SK-N-SH (cell line): ENCODE measurements at regions of chr7 and their contacts with region 1.

Region 1: DNA sequence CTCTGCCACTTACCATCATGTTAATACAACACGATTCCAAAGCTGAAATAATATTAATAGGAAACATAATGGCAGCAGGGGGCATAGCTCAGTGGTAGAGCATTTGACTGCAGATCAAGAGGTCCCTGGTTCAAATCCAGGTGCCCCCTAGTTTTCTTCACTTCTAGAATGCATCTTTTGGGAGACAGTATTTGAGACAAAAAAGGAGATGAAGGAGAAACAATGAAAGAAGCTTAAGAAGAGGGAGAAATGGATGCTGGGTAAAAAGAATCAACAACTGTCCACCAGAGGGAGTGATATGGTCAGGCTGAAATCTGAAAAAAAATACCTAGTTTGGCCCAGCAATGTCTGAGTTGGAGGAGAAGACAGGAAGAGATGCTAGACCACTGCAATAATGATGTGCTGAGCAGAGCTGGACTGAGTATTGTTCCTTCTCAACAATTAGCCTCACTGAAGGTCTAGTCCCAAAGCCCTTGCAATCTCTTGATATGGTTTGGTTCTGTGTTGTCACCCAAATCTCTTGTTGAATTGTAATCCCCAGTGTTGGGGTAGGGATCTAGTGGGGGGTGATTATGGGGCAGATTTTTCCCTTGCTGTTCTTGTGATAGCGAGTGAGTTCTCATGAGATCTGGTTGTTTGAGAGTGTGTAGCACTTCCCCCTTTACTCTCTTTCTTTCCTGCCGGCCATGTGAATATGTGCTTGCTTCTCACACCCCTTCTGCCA is 48.3 kb downstream of the ZNF783 start:
- DNase-seq: peak; percentile 69
- H3K4me3 ChIP-seq: no peak overlapping the region
- H3K27ac ChIP-seq: no peak overlapping the region
- H3K4me1 ChIP-seq: no peaks in the 10 kb centered on the region
- H3K27me3 ChIP-seq: no peaks in the 10 kb centered on the region
- CTCF ChIP-seq: peak; percentile 78
- EP300 ChIP-seq: no peak
- RAD21 ChIP-seq: peak; percentile 67

Region 2: DNA sequence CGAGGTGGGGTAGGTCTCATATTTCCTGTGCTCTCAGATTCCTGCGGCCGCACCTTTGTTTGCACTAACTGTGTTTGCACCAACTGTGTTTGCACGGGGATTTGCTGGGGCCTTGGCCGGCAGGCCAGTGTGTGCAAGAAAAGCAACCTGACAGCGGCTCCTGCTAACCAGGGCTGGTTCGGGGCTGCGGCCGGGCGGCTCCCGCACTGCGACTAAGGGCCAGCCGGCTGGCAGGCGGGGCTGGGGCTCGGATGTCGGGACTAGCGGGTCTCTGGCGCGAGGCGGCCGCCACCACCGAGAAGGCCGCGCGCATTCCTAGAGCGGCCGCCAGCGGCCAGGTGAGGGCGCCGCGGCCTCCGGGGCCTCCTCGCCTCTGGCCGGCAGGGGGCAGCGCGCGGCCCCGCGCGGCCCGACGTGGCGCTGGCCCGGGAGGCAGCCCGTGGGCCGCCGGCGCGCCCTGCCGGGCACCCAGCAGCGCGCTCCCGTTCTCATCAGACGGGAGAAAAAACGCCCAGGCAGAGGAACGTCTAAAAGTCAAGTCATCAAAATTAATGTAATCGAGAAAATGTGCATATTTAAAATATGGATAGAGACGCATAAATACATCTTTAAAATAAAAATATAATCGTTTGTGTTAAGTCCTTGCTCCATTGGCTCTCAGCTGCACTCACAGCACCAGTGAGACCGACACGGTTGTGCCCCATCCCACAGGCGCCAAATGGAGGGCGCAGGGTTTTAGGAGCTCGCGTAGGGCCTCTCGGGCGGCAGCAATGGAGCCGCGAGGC is 112.0 kb after region 1 on chr7:
- CTCF ChIA-PET with region 1: interaction called, 11 read pairs
- POLR2A ChIA-PET with region 1: no interaction called
- DNase-seq: peak; percentile 99
- H3K4me3 ChIP-seq: peak overlapping the region; percentile 35 to 40; a peak in 3 of 4 replicates
- H3K27ac ChIP-seq: no peak overlapping the region
- H3K4me1 ChIP-seq: peaks cover 0 to 3% of the 10 kb centered on the region in 2 experiments; a peak in 1 of 4 replicates
- H3K27me3 ChIP-seq: no peaks in the 10 kb centered on the region
- CTCF ChIP-seq: peak; percentile 39
- EP300 ChIP-seq: no peak
- RAD21 ChIP-seq: peak; percentile 42